ENCODE measurements at regions of chr5 and their contacts with region 1.

Region 1: DNA sequence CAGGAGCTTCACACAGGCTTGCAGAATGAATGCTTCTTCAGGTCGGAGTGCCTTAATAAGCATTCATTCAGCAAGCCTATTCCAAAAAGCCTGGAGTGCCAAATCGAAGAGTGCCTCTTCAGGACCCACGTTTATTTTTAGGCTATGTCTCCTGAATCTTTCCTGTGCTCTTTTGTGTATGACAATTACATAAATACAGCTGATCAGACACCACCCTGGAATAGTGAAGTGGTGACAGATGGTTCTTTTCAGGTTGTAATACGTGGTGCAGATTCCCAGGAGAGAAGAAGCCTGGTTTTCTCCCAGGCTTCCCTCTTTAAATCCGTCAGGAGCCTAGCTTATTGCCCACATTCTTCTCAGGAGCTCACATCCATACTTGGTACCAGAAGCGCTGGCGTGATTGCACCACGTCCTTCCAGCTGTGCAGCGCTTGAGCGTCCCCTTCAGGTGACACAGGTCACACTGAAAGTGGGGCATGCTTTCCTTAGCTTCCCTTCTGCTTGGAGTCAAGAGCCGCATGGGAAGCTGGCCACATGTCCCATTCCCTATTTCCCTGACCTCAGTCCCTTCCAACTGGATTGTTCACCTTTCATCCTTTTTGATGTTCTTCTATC is 123.1 kb downstream of the ADCY2 start:
- DNase-seq: peak; percentile 79
- ATAC-seq: peak; percentile 77
- H3K4me3 Mint-ChIP-seq: no peak overlapping the region
- H3K27ac Mint-ChIP-seq: peak overlapping the region; percentile 67
- H3K4me1 Mint-ChIP-seq: peaks cover 59% of the 10 kb centered on the region
- H3K27me3 Mint-ChIP-seq: no peaks in the 10 kb centered on the region
- CTCF ChIP-seq: peak; percentile 59

Region 2: DNA sequence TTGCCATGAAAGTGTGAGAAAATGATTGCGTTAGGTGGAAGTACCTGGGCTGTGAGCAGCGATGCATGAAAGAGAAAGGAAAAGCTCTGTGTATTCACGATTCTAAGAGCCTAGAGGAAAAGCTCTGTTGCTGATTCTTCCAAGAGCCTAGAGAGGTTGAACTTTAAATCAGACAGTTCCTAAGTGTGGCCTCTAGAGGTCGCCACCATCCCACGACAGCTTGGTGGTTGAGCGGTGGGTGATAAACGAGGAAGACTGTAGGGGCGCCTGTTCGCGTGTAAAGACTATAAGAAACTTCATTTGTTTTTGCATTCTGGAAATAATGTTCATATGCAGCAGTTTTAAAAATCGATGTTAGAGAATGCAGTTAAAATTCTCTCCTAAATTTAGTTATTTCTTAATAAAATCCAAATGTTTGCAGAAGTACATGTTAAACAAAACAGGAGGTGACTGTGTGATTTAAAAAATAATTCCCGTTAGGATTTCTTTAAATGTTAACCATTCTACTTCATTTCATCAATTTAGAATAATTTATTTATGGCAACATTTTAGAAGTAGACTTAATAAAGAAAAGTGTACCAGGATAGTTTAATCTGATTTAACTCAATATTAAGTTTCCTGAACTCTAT is 698.1 kb before region 1 on chr5:
- CTCF ChIA-PET with region 1: interaction called, 14 read pairs
- POLR2A ChIA-PET with region 1: no interaction called
- DNase-seq: peak; percentile 83
- ATAC-seq: peak; percentile 77
- H3K4me3 Mint-ChIP-seq: no peak overlapping the region
- H3K27ac Mint-ChIP-seq: no peak overlapping the region
- H3K4me1 Mint-ChIP-seq: peaks cover 17% of the 10 kb centered on the region
- H3K27me3 Mint-ChIP-seq: no peaks in the 10 kb centered on the region; the same call in 1 of the 2 replicates
- CTCF ChIP-seq: peak; percentile 90

Region 3: GRCh38 chr5:7261049-7261448 is 258.0 kb before region 1 on chr5:
- CTCF ChIA-PET with region 1: interaction called, 13 read pairs
- POLR2A ChIA-PET with region 1: no interaction called
- DNase-seq: peak; percentile 80
- ATAC-seq: peak; percentile 100
- H3K4me3 Mint-ChIP-seq: peak overlapping the region; percentile 29; the same call in 1 of the 2 replicates
- H3K27ac Mint-ChIP-seq: peak overlapping the region; percentile 95
- H3K4me1 Mint-ChIP-seq: peaks cover 60% of the 10 kb centered on the region
- H3K27me3 Mint-ChIP-seq: no peaks in the 10 kb centered on the region; the same call in 1 of the 2 replicates
- CTCF ChIP-seq: no peak

Region 4: DNA sequence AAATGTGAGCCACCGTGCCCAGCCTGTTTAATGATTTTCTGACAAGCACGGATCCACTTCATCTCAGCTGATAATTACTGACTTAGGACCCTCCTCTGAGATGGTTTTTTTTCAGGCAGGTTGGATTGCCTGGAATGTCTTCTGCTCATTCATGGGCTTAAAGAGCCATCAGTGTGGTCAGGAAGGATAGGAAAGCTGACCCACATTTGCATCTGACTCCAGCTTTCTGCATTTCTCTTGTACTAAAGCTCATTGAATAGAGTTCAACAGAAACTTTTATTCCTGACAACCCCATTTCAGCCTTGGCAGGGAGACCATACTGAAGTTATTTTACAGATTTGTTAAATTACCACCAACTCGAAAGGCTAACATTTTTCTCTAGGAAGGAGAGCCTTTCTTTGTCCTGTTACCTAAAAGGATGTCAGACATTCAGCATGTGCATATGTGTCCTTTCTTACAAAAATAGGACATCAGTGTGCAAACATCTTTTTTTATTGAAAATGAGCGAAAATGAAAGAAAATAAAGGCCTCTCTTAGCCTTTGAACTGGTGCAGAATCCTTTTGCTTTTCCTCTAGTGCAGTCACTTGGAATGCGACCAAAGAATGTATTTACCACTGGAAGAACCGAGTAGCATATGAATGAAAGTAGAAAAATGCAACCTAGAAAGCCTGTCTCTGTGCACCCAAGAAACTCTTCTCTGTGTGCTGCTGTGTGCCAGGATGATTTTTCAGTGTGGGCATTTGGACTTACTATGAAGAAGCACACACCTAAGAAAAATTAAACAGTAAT is 96.5 kb before region 1 on chr5:
- CTCF ChIA-PET with region 1: interaction called, 23 read pairs
- POLR2A ChIA-PET with region 1: no interaction called
- DNase-seq: no peak
- ATAC-seq: peak; percentile 17
- H3K4me3 Mint-ChIP-seq: peak overlapping the region; percentile 41
- H3K27ac Mint-ChIP-seq: peak overlapping the region; percentile 91
- H3K4me1 Mint-ChIP-seq: peaks cover 96% of the 10 kb centered on the region
- H3K27me3 Mint-ChIP-seq: no peaks in the 10 kb centered on the region
- CTCF ChIP-seq: no peak

Region 5: GRCh38 chr5:7464182-7464581 is 54.9 kb before region 1 on chr5:
- CTCF ChIA-PET with region 1: interaction called, 25 read pairs
- POLR2A ChIA-PET with region 1: interaction called, 3 read pairs
- DNase-seq: no peak
- ATAC-seq: peak; percentile 57
- H3K4me3 Mint-ChIP-seq: no peak overlapping the region
- H3K27ac Mint-ChIP-seq: peak overlapping the region; percentile 30
- H3K4me1 Mint-ChIP-seq: peaks cover 83% of the 10 kb centered on the region
- H3K27me3 Mint-ChIP-seq: no peaks in the 10 kb centered on the region
- CTCF ChIP-seq: no peak

Region 6: GRCh38 chr5:7494481-7495130 is 24.4 kb before region 1 on chr5:
- CTCF ChIA-PET with region 1: interaction called, 14 read pairs
- POLR2A ChIA-PET with region 1: no interaction called
- DNase-seq: no peak
- ATAC-seq: peak; percentile 39
- H3K4me3 Mint-ChIP-seq: no peak overlapping the region
- H3K27ac Mint-ChIP-seq: peak overlapping the region; percentile 21; the same call in 1 of the 2 replicates
- H3K4me1 Mint-ChIP-seq: peaks cover 16% of the 10 kb centered on the region
- H3K27me3 Mint-ChIP-seq: no peaks in the 10 kb centered on the region
- CTCF ChIP-seq: no peak

Region 7: GRCh38 chr5:7529880-7530279 is 10.8 kb after region 1 on chr5:
- CTCF ChIA-PET with region 1: interaction called, 11 read pairs
- POLR2A ChIA-PET with region 1: no interaction called
- DNase-seq: no peak
- ATAC-seq: no peak
- H3K4me3 Mint-ChIP-seq: no peak overlapping the region
- H3K27ac Mint-ChIP-seq: no peak overlapping the region
- H3K4me1 Mint-ChIP-seq: peaks cover 26% of the 10 kb centered on the region
- H3K27me3 Mint-ChIP-seq: no peaks in the 10 kb centered on the region
- CTCF ChIP-seq: no peak

Region 8: DNA sequence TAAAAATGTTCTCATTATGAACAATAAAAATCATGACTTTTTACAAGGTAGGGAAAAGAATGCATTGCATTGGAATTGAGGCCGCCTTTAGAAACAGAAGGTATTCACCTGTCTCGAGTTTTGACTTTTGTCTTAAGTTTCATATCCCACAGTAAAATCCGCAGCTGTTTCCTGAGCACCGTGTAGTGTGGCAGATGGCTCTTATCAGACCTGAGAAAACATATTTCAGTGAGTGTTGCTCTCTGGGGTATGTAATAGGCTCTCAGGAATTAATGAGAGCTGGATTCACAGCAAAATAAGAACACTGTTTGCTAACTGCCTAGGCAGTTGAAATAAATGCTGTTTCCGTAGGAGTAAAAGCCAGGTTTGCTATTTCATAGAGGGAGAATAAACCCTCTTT is 110.5 kb after region 1 on chr5:
- CTCF ChIA-PET with region 1: no interaction called
- POLR2A ChIA-PET with region 1: no interaction called
- DNase-seq: no peak
- ATAC-seq: no peak
- H3K4me3 Mint-ChIP-seq: no peak overlapping the region
- H3K27ac Mint-ChIP-seq: no peak overlapping the region; the same call in 1 of the 2 replicates
- H3K4me1 Mint-ChIP-seq: peaks cover 17% of the 10 kb centered on the region
- H3K27me3 Mint-ChIP-seq: no peaks in the 10 kb centered on the region
- CTCF ChIP-seq: no peak